ENCODE measurements at regions of chr9 and their contacts with region 1.

Region 1: GRCh38 chr9:21933865-21934264 is 60.3 kb downstream of the CDKN2A start:
- DNase-seq: no peak
- ATAC-seq: no peak
- H3K4me3 ChIP-seq: no peak overlapping the region
- H3K27ac ChIP-seq: no peak overlapping the region
- H3K4me1 ChIP-seq: no peaks in the 10 kb centered on the region
- H3K27me3 ChIP-seq: no peaks in the 10 kb centered on the region
- CTCF ChIP-seq: no peak

Region 2: DNA sequence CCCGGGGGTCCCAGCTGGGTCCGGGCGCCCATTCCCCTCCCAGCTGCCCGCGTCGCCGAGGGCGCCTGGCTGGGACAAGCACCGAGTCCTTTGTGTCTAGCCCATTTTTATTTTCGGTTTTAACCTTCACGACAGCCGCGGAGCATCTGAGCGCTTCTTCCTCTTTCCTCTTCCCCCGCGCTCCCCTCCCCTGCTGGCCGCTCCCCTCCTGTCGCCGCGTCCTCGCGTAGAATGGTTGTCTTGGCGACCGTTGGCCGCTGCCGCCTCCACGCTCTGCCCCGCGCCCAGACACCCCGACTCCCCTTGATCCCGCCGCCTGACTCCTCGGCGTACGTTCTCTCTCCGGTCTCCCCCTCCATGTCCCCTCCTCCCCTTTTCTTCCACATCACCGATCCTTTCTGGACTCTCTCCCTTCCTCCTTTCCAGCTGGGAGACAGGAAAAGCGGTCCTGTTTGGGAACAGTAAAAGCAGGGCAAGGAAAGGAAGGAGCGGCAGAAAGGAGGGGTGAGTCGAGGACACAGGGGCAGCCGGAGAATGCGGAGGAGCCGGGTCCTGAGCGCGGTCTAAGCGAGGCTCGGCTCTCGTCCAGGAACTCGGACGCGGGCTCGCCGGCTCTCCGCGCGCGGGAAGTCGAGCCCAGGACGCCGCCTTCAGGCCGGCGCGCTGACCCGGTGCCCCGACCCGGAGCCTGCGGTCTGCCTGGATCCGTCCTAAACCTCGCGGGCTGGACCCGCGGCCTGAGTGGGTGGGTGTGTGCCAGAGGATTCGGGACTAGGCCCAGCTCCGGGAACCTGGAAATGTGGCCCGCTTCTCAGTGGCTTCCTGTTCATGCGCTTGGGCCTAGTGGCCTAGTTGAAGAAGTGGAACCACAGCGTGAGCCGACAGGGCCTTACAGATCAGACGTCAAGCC is 61.6 kb after region 1 on chr9:
- intact Hi-C with region 1: loop called in 1 of 2 experiments (anchors 10 kb)
- DNase-seq: peak; percentile 74 to 84
- ATAC-seq: peak; percentile 65 to 86 (median 74)
- H3K4me3 ChIP-seq: peak overlapping the region; percentile 98
- H3K27ac ChIP-seq: peak overlapping the region; percentile 60
- H3K4me1 ChIP-seq: peaks cover 5% of the 10 kb centered on the region
- H3K27me3 ChIP-seq: peaks cover 0 to 21% (median 7%) of the 10 kb centered on the region in 3 donors
- CTCF ChIP-seq: no peak